ENCODE measurements at regions of chr3 and their contacts with region 1.

Region 1: DNA sequence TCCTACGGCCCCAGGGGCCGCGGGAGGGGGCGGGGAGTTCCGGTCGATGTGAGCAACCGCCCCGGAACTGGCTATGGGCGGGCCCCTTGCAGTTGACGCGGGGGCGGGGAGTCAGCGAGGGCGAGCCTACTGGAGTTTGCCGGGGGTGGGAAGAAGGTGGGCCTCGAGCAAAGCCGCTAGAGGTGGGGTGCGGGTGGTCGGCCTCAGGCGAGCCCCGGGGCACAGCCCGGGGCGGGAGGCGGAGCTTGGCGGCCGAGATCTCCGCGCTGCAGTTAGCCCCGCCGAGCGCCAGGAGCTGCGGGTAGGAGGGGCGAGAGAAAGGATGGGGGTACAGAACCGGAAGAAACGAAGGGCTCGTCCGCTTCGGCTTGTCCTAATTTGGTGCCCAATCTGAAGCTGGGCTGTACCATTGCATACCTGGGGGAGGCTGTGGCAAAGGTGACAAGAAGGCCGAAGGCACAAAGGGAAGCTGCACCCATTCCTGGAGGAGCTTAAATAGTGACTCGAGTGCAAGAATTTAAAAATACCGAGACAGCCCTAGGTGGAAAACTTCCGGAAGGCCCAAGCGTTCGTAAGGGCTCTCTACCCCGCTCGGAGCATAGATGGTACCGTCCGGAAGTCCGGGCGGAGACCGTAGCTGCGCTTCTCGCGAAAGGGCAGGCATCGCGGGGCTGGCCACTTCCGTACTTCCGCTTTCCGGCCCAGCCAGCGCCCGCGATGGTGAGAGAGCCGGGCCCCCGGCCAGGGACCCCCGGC is at the starts of genes ARPC4 and TADA3:
- DNase-seq: peak; percentile 92 to 95 (median 94)
- H3K4me3 ChIP-seq: peak within 1 kb of the TSS; percentile 58
- H3K27ac ChIP-seq: peak within 1 kb of the TSS; percentile 68 to 96
- H3K4me1 ChIP-seq: peaks cover 9% of the 10 kb centered on the region
- H3K27me3 ChIP-seq: no peaks in the 10 kb centered on the region
- CTCF ChIP-seq: peak in 2 of 3 donors; percentile 41 to 62
- EP300 ChIP-seq: no peak
- POLR2A ChIP-seq: peak; percentile 63
- total RNA-seq, gene ARPC4: 58.3 to 123 (median 85.1) TPM
- total RNA-seq, gene TADA3: 49.4 to 77.9 (median 67.4) TPM

Region 2: GRCh38 chr3:9582332-9582731 is 210.3 kb before region 1 on chr3:
- intact Hi-C with region 1: no loop called
- DNase-seq: no peak
- H3K4me3 ChIP-seq: no peak overlapping the region
- H3K27ac ChIP-seq: no peak overlapping the region
- H3K4me1 ChIP-seq: no peaks in the 10 kb centered on the region
- H3K27me3 ChIP-seq: no peaks in the 10 kb centered on the region
- CTCF ChIP-seq: no peak
- EP300 ChIP-seq: no peak
- POLR2A ChIP-seq: no peak

Region 3: GRCh38 chr3:9769426-9770275 is 22.9 kb before region 1 on chr3 and contains the start of gene CAMK1:
- intact Hi-C with region 1: loop called in 2 of 4 experiments (anchors 2 kb)
- DNase-seq: peak; percentile 87 to 91 (median 88)
- H3K4me3 ChIP-seq: peak within 1 kb of the TSS; percentile 57
- H3K27ac ChIP-seq: peak within 1 kb of the TSS; percentile 74 to 92
- H3K4me1 ChIP-seq: peaks cover 6% of the 10 kb centered on the region
- H3K27me3 ChIP-seq: no peaks in the 10 kb centered on the region
- CTCF ChIP-seq: no peak
- EP300 ChIP-seq: no peak
- POLR2A ChIP-seq: peak; percentile 88
- total RNA-seq, gene CAMK1: 38.4 to 67.3 (median 48.4) TPM